ENCODE measurements at regions of chr13 and their contacts with region 1.

Region 1: DNA sequence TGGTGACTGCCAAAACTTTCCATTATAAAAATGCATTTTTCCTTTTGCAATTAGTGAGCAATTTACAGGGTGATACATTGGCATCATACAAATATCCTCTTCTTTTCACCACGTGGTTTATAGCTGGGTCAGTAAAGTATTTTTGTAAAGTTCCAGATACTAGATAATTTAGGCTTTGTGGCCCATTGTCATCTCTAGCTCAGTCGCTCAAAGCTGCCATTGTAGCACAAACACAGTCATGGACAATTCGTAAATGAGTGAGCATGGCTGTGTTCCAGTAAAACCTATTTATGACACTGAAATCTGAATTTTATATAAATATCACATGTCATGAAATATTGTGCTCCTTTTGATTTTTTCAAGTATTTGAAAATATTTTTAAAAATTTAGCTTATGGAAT is 162.9 kb downstream of the USP12 start:
- DNase-seq: no peak
- H3K4me3 ChIP-seq: no peak overlapping the region
- H3K27ac ChIP-seq: no peak overlapping the region
- H3K4me1 ChIP-seq: no peaks in the 10 kb centered on the region
- CTCF ChIP-seq: no peak

Region 2: GRCh38 chr13:26601669-26602068 is 407.1 kb before region 1 on chr13:
- CTCF ChIA-PET with region 1: no interaction called
- POLR2A ChIA-PET with region 1: no interaction called
- intact Hi-C with region 1: no loop called
- DNase-seq: peak; percentile 41
- H3K4me3 ChIP-seq: no peak overlapping the region
- H3K27ac ChIP-seq: no peak overlapping the region
- H3K4me1 ChIP-seq: peaks cover 9% of the 10 kb centered on the region
- CTCF ChIP-seq: peak; percentile 52; the same call in 1 of the 2 replicates

Region 3: DNA sequence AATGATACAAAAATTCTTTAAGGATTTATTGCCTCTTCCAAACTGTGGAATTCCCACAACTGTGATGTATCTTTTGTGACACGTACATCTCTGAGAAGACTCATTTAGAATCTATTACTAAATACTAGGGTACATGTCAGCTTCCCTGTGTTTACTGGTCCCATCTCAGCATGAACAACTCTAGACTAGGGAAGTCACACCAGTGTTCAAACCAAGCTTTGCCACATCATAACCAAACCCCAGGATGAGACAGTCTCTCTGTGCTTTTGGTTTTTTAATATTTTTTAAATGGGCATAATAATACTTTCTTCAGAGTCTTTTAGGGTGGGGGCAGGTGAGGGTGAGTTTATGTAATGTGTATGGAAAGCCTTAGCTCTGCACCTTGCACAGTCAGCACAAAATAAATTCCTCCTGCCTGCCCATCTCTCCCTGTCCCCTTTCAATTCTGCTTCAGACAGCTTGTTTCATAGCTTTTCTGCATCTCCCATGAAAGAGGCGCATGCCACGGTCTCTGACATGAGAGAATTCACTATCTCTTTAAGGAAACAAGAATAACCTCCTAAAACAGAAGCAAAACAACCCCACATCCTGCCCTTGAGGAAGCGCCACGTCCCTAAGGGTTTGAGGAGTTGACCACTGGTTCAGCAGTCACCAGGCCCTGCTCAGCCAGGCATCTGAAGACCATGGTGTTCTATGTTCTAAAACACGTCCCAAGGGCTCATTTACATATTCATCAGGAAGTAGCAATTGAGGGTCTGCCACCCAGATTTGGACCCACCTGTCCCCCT is 11.6 kb before region 1 on chr13:
- CTCF ChIA-PET with region 1: no interaction called
- POLR2A ChIA-PET with region 1: interaction called, 14 read pairs
- intact Hi-C with region 1: no loop called
- DNase-seq: peak; percentile 75
- H3K4me3 ChIP-seq: peak overlapping the region; percentile 10
- H3K27ac ChIP-seq: no peak overlapping the region
- H3K4me1 ChIP-seq: peaks cover 15% of the 10 kb centered on the region
- CTCF ChIP-seq: no peak

Measured in OCI-LY7 (cell line).